H1 (cell line): ENCODE measurements at regions of chr14 and their contacts with region 1.

Region 1: GRCh38 chr14:78933948-78934524 is 763.9 kb downstream of the NRXN3 start:
- DNase-seq: no peak
- H3K4me3 ChIP-seq: no peak overlapping the region
- H3K27ac ChIP-seq: no peak overlapping the region
- H3K4me1 ChIP-seq: no peaks in the 10 kb centered on the region; a peak in 1 of 7 replicates
- H3K27me3 ChIP-seq: no peaks in the 10 kb centered on the region
- CTCF ChIP-seq: peak in 2 of 3 experiments; percentile 35 to 40; a peak in 2 of 4 replicates
- EP300 ChIP-seq: no peak
- POLR2A ChIP-seq: no peak
- RAD21 ChIP-seq: peak; percentile 77 to 81

Region 2: GRCh38 chr14:78950649-78951048 is 16.6 kb after region 1 on chr14:
- CTCF ChIA-PET with region 1: interaction called, 37 read pairs
- POLR2A ChIA-PET with region 1: no interaction called
- DNase-seq: no peak
- H3K4me3 ChIP-seq: no peak overlapping the region
- H3K27ac ChIP-seq: no peak overlapping the region
- H3K4me1 ChIP-seq: no peaks in the 10 kb centered on the region
- H3K27me3 ChIP-seq: no peaks in the 10 kb centered on the region
- CTCF ChIP-seq: no peak
- EP300 ChIP-seq: no peak
- POLR2A ChIP-seq: no peak
- RAD21 ChIP-seq: no peak

Region 3: DNA sequence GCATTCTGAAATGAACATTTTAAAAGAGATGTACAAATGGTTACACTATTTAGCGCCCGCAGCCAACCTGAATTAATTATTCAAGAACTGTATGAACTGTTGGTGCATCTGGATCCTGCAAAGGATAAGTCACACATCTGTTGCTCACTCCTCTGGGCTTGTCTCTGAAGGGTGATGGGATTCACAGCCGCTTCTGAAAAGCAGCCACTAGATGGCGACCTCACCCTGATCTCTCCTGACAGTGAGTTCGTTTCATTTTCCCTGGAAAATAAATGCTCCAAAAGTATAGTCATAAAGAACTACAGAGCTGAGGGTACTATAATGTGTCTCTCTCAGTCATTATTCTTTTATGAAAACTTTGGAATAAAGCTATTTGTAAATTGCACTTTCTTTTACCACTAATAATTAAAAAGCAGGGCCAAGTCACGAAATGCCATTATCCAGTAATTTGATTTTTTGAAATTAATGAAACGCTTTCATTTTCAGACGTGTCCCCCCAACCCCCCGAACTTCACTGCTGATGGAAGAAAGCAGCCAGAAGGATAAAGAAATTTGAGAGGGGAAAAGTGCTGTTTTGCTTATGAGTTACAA is 25.7 kb after region 1 on chr14:
- CTCF ChIA-PET with region 1: interaction called, 27 read pairs
- POLR2A ChIA-PET with region 1: no interaction called
- DNase-seq: peak; percentile 34 to 80
- H3K4me3 ChIP-seq: no peak overlapping the region
- H3K27ac ChIP-seq: no peak overlapping the region
- H3K4me1 ChIP-seq: no peaks in the 10 kb centered on the region
- H3K27me3 ChIP-seq: no peaks in the 10 kb centered on the region
- CTCF ChIP-seq: peak; percentile 66 to 85 (median 69)
- EP300 ChIP-seq: no peak
- POLR2A ChIP-seq: no peak
- RAD21 ChIP-seq: peak; percentile 85 to 86

Region 4: DNA sequence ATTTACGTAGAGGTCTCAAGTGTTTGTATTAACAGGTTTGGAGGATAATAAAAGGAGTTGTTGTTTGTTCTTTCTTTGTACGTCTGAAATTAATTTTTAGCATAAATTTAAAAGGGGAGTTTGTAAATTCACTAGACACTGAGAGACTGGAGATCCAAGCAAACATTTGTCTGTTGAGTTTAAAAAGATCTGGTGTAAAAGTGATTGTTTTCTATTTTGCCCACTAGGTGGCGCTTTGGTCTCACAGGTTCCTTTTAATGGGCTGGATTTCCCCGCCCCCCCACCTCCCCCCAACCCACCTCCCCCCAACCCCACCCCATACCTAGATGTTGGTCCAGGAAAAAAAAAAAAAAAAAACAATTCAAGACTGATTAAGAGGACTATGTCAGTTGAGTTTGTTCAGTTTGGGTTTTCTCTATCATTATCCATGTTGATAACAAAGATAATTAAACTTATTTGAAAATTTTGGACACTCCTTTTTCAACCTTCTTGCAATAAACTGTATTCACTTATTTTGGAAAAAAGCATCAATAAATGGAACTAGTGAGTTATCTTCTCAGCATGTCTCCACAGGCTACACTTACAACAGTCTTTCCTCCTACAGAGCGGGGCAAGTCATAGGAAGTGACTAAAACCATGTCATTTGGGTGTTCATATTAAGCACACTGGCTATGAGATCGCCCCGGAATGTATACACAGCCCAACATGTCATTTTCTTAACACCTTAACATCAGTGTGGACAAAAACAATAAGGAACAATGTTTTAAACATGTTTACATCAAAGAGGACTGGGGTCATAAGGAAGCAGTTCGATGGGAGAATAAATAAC is 77.3 kb after region 1 on chr14:
- CTCF ChIA-PET with region 1: interaction called, 14 read pairs
- POLR2A ChIA-PET with region 1: no interaction called
- DNase-seq: no peak
- H3K4me3 ChIP-seq: no peak overlapping the region
- H3K27ac ChIP-seq: no peak overlapping the region
- H3K4me1 ChIP-seq: no peaks in the 10 kb centered on the region
- H3K27me3 ChIP-seq: no peaks in the 10 kb centered on the region; a peak in 1 of 7 replicates
- CTCF ChIP-seq: peak in 2 of 3 experiments; percentile 36 to 48; a peak in 2 of 4 replicates
- EP300 ChIP-seq: no peak
- POLR2A ChIP-seq: no peak
- RAD21 ChIP-seq: peak; percentile 66 to 72